SK-N-SH (cell line): ENCODE measurements at regions of chr10 and their contacts with region 1.

Region 1: DNA sequence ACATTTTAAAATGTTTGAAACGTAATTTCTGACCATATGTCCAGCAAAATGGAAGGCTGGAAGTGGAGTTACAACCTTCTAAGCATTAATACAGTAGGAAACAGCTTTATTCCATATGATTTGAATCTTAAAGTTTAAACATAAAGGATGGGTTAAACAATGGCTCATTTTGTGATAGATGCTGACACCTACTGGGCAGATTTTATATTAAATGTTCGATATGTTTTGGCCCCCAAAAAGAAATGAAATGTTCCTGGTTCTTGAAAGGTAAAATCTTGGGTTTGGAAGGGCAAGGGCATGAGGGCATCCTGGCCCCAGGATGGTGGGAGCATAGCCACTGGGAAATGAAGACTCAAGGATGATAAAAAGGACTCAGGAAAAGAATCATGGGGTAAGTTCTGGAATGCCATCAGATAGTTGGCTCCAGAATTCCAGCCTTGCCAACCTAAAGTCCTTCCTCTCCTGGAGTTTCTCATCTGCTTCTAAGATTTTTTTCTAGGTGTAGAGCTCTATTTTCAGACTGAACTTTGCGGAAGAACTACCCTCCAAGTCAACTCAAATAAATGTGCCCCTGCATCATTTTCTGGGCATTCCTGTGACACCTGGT is 34.6 kb upstream of the SLC35G1 start:
- DNase-seq: peak; percentile 26
- H3K4me3 ChIP-seq: no peak overlapping the region; a peak in 1 of 4 replicates
- H3K27ac ChIP-seq: no peak overlapping the region
- H3K4me1 ChIP-seq: peaks cover 0 to 5% of the 10 kb centered on the region in 2 experiments; a peak in 2 of 4 replicates
- H3K27me3 ChIP-seq: no peaks in the 10 kb centered on the region
- CTCF ChIP-seq: peak; percentile 65
- EP300 ChIP-seq: no peak
- RAD21 ChIP-seq: peak; percentile 80

Region 2: GRCh38 chr10:93554760-93555432 is 304.3 kb before region 1 on chr10:
- CTCF ChIA-PET with region 1: interaction called, 28 read pairs
- POLR2A ChIA-PET with region 1: no interaction called
- DNase-seq: peak; percentile 79
- H3K4me3 ChIP-seq: no peak overlapping the region
- H3K27ac ChIP-seq: no peak overlapping the region
- H3K4me1 ChIP-seq: no peaks in the 10 kb centered on the region
- H3K27me3 ChIP-seq: no peaks in the 10 kb centered on the region
- CTCF ChIP-seq: peak; percentile 67
- EP300 ChIP-seq: no peak
- RAD21 ChIP-seq: peak; percentile 72

Region 3: GRCh38 chr10:93711891-93712290 is 147.3 kb before region 1 on chr10:
- CTCF ChIA-PET with region 1: interaction called, 15 read pairs
- POLR2A ChIA-PET with region 1: no interaction called
- DNase-seq: no peak
- H3K4me3 ChIP-seq: no peak overlapping the region
- H3K27ac ChIP-seq: no peak overlapping the region
- H3K4me1 ChIP-seq: peaks cover 0 to 9% of the 10 kb centered on the region in 2 experiments; a peak in 1 of 4 replicates
- H3K27me3 ChIP-seq: no peaks in the 10 kb centered on the region
- CTCF ChIP-seq: no peak
- EP300 ChIP-seq: no peak
- RAD21 ChIP-seq: no peak

Region 4: GRCh38 chr10:93752761-93753160 is 106.4 kb before region 1 on chr10:
- CTCF ChIA-PET with region 1: interaction called, 11 read pairs
- POLR2A ChIA-PET with region 1: no interaction called
- DNase-seq: no peak
- H3K4me3 ChIP-seq: no peak overlapping the region
- H3K27ac ChIP-seq: no peak overlapping the region
- H3K4me1 ChIP-seq: peaks cover 0 to 16% of the 10 kb centered on the region in 2 experiments; a peak in 1 of 4 replicates
- H3K27me3 ChIP-seq: no peaks in the 10 kb centered on the region
- CTCF ChIP-seq: no peak
- EP300 ChIP-seq: no peak
- RAD21 ChIP-seq: no peak

Region 5: DNA sequence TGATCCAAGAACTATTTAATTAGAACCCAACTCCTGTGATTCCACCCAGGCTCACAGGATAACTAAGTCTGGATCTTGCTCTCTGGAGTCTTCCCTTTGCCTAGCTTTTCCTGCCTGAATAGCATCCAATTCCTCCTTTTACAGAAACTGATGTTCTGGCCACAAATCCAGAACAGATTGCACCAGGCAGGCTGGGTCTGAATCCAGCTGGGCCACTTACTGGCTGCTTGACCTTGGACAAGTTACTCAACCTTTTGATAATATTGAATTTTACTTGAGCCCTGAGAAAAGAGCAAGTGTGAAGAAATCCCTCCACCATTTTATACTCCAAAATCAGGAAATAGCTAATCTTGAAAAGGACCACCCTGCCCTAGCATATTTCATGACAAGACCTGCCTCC is 20.9 kb before region 1 on chr10:
- CTCF ChIA-PET with region 1: interaction called, 11 read pairs
- POLR2A ChIA-PET with region 1: no interaction called
- DNase-seq: no peak
- H3K4me3 ChIP-seq: no peak overlapping the region
- H3K27ac ChIP-seq: no peak overlapping the region
- H3K4me1 ChIP-seq: no peaks in the 10 kb centered on the region
- H3K27me3 ChIP-seq: peaks cover 7% of the 10 kb centered on the region; the same call in 1 of the 2 replicates
- CTCF ChIP-seq: no peak
- EP300 ChIP-seq: no peak
- RAD21 ChIP-seq: no peak

Region 6: GRCh38 chr10:94251568-94251967 is 392.4 kb after region 1 on chr10:
- CTCF ChIA-PET with region 1: no interaction called
- POLR2A ChIA-PET with region 1: no interaction called
- DNase-seq: no peak
- H3K4me3 ChIP-seq: no peak overlapping the region
- H3K27ac ChIP-seq: no peak overlapping the region
- H3K4me1 ChIP-seq: no peaks in the 10 kb centered on the region; a peak in 1 of 4 replicates
- H3K27me3 ChIP-seq: no peaks in the 10 kb centered on the region
- CTCF ChIP-seq: no peak
- EP300 ChIP-seq: no peak
- RAD21 ChIP-seq: no peak